ENCODE measurements at regions of chr9 and their contacts with region 1.

Region 1: GRCh38 chr9:121700163-121700831 is 48.9 kb downstream of the DAB2IP start:
- DNase-seq: peak in 5 of 9 experiments; percentile 19 to 51 (median 45)
- ATAC-seq: peak; percentile 19
- H3K4me3 ChIP-seq: peak overlapping the region in 1 of 2 experiments; percentile 22
- H3K4me3 Mint-ChIP-seq: peak overlapping the region; percentile 66
- H3K27ac ChIP-seq: no peak overlapping the region
- H3K27ac Mint-ChIP-seq: no peak overlapping the region
- H3K4me1 ChIP-seq: peaks cover 8% of the 10 kb centered on the region
- H3K4me1 Mint-ChIP-seq: peaks cover 23% of the 10 kb centered on the region
- H3K27me3 ChIP-seq: peaks cover 12 to 18% of the 10 kb centered on the region in 2 experiments
- H3K27me3 Mint-ChIP-seq: peaks cover 22% of the 10 kb centered on the region
- CTCF ChIP-seq: no peak

Region 2: DNA sequence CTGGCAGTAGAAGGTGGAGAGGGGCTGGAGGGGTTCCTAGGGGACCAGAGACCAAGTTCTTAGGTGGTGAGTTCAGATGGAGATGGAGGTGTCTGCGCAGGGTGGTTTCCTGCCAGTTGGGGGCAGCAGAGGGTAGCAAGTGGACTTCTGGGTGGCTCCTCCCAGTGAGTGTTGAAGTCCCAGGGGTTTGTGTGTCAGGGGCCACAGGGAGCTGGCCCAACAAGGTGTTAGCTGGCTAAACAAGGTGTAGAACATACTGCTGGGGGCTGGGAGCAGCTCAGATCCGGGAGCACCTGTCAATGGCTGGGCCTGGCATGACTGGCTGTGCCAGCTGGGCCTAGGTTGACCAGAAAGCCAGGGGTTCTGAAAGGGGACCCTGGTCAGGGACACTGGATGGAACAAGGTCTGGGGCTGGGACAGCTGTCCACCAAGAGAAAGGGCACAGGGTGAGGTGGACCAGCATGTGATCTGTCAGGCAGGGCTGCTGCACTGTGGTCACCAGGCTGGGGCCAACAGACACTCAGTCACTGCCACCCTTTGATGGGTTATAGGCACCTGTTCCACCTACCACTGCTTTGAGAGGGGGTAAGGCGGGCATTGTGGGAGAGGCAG is 13.3 kb before region 1 on chr9:
- CTCF ChIA-PET with region 1: interaction called, 8 read pairs
- POLR2A ChIA-PET with region 1: no interaction called
- intact Hi-C with region 1: loop called in 1 of 2 experiments (anchors 1 kb)
- DNase-seq: peak; percentile 17 to 72 (median 57)
- ATAC-seq: peak; percentile 59
- H3K4me3 ChIP-seq: no peak overlapping the region
- H3K4me3 Mint-ChIP-seq: no peak overlapping the region
- H3K27ac ChIP-seq: no peak overlapping the region
- H3K27ac Mint-ChIP-seq: no peak overlapping the region
- H3K4me1 ChIP-seq: no peaks in the 10 kb centered on the region
- H3K4me1 Mint-ChIP-seq: no peaks in the 10 kb centered on the region
- H3K27me3 ChIP-seq: no peaks in the 10 kb centered on the region
- H3K27me3 Mint-ChIP-seq: peaks cover 10% of the 10 kb centered on the region
- CTCF ChIP-seq: peak; percentile 65

Region 3: DNA sequence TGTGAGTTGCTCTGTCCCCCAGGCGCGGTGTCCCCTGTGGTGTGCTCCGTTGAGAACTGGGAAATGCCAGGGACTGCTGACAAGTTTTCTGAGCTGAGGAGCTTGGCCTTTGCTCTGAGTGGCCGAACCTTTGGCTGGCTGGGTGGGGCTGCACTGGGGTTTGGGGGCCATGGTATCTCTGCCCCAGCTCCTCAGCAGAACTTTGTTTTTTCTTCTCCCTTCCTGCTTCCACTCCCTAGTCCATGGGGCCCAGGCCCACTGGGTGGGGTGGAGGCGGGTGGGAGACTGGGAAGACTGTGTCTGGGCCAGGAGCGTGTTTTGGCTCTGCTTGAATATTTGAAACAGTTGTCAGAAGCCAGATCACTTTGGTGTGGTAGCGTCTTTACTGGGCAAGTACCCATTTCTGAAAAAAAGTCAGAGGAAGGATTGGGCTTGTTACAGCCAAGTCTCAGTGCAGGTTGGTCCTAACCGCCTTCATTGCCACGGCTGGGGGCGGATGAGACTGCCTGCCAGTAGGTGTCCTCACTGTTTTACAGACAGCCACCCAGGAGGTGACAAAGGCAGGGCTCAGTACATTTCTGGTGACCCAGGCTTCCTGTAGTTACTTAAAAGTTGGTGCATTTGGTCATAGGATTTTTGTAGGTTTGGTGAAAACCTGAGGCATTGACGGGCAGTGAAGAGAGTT is 43.8 kb after region 1 on chr9:
- CTCF ChIA-PET with region 1: interaction called, 3 read pairs
- POLR2A ChIA-PET with region 1: no interaction called
- intact Hi-C with region 1: loop called in 1 of 2 experiments (anchors 1 kb)
- DNase-seq: peak in 7 of 9 experiments; percentile 6 to 72 (median 60)
- ATAC-seq: peak; percentile 66
- H3K4me3 ChIP-seq: no peak overlapping the region
- H3K4me3 Mint-ChIP-seq: no peak overlapping the region
- H3K27ac ChIP-seq: no peak overlapping the region
- H3K27ac Mint-ChIP-seq: no peak overlapping the region
- H3K4me1 ChIP-seq: peaks cover 14% of the 10 kb centered on the region
- H3K4me1 Mint-ChIP-seq: peaks cover 18% of the 10 kb centered on the region
- H3K27me3 ChIP-seq: no peaks in the 10 kb centered on the region
- H3K27me3 Mint-ChIP-seq: no peaks in the 10 kb centered on the region
- CTCF ChIP-seq: peak; percentile 39